ENCODE measurements at regions of chrX and their contacts with region 1.

Region 1: GRCh38 chrX:54529552-54530357 is at the start of gene GNL3L:
- DNase-seq: peak; percentile 93 to 94
- ATAC-seq: peak; percentile 91
- H3K4me3 ChIP-seq: peak within 1 kb of the TSS; percentile 27 to 89
- H3K27ac ChIP-seq: peak within 1 kb of the TSS in 1 of 2 donors; percentile 91
- H3K4me1 ChIP-seq: no peaks in the 10 kb centered on the region
- H3K27me3 ChIP-seq: no peaks in the 10 kb centered on the region
- total RNA-seq, gene GNL3L: 29.8 to 35.1 TPM

Region 2: DNA sequence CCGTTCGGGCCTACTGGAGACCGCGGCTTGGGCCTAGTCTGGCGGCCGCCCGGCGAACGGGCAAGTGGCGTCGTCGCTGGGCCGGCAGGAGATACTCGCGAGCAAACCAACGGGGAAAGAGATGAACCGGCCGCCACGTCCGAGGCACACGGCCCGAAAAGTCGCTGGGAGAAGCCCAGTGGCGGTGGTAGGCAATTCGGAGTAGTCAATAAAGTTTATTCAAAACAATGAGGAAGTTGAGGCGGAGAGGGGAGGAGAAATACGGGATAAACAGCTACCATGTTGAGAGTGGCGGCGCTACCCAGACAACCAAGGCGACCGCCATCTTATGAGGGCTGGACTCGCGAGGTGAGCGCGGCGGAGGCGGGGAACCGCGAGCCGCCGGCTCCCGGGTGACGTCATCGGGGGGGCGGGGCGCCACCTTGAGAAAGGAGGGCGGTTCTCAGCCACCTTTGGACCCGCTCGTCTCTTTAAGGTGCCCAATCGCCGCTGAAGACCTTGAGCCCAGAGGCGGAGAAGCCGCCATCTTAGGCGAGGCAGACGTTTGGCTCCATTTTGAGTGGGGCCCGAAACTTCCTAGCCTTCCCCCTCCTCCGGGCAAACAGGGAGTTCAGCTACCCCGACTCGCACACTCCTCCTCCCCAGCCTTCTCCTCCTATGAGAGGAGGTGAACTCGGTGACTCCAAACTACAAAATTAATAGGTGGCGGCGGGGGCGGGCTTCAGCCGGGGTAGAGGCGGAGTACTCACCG is 485.5 kb before region 1 on chrX and contains the start of gene PHF8:
- intact Hi-C with region 1: loop called in 1 of 2 experiments (anchors 10 kb)
- DNase-seq: peak; percentile 96 to 97
- ATAC-seq: peak; percentile 96
- H3K4me3 ChIP-seq: peak within 1 kb of the TSS; percentile 67 to 96
- H3K27ac ChIP-seq: peak within 1 kb of the TSS; percentile 7 to 93
- H3K4me1 ChIP-seq: no peaks in the 10 kb centered on the region
- H3K27me3 ChIP-seq: no peaks in the 10 kb centered on the region
- total RNA-seq, gene PHF8: 34.2 to 39.7 TPM

Region 3: GRCh38 chrX:54439967-54440871 is 89.5 kb before region 1 on chrX and contains the start of gene TSR2:
- intact Hi-C with region 1: loop called in 1 of 2 experiments (anchors 10 kb)
- DNase-seq: peak; percentile 86 to 90
- ATAC-seq: peak; percentile 95
- H3K4me3 ChIP-seq: peak within 1 kb of the TSS; percentile 65 to 79
- H3K27ac ChIP-seq: no peak within 1 kb of the TSS
- H3K4me1 ChIP-seq: no peaks in the 10 kb centered on the region
- H3K27me3 ChIP-seq: no peaks in the 10 kb centered on the region
- total RNA-seq, gene TSR2: 39.5 to 42.7 TPM

Region 4: DNA sequence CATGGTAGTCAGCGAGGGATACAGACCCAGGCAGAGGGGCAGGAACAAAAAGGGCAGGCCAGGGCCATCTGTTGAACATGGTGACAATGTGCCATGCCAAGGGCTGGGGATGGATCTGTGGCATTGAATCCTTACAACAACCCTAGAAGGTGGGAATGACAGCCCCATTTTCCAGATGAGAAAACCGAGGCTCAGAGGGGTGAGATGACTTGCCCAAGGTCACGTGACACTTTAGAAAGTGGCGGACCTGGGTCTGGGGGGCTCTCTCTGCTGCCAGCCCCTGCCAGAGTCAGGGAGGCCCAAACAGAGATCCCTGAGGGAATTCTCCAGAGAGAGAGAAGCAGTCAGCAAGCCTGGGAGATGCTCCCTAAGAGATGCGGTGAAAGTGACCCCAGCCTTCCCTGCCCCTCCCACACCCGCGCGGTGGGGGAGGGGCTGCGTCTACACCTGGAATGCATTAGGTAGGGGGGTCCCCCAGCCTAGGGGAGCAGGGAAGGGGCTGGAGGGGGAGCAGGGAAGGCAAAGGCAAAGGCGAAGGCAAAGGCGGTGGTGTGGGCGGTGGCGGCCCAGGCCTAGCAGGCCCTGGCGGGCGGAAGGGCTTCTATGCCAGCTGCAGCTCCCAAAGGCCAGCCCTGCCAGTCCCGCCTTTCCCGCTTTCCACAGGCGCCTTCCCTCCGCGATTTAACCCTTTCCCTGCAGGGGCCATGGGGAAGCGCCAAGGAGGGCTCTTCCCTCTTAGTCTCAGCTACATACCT is 46.7 kb before region 1 on chrX:
- intact Hi-C with region 1: loop called in 1 of 2 experiments (anchors 5 kb)
- DNase-seq: peak; percentile 52 to 79
- ATAC-seq: peak; percentile 61
- H3K4me3 ChIP-seq: no peak overlapping the region
- H3K27ac ChIP-seq: peak overlapping the region; percentile 39 to 52
- H3K4me1 ChIP-seq: no peaks in the 10 kb centered on the region
- H3K27me3 ChIP-seq: no peaks in the 10 kb centered on the region

Region 5: DNA sequence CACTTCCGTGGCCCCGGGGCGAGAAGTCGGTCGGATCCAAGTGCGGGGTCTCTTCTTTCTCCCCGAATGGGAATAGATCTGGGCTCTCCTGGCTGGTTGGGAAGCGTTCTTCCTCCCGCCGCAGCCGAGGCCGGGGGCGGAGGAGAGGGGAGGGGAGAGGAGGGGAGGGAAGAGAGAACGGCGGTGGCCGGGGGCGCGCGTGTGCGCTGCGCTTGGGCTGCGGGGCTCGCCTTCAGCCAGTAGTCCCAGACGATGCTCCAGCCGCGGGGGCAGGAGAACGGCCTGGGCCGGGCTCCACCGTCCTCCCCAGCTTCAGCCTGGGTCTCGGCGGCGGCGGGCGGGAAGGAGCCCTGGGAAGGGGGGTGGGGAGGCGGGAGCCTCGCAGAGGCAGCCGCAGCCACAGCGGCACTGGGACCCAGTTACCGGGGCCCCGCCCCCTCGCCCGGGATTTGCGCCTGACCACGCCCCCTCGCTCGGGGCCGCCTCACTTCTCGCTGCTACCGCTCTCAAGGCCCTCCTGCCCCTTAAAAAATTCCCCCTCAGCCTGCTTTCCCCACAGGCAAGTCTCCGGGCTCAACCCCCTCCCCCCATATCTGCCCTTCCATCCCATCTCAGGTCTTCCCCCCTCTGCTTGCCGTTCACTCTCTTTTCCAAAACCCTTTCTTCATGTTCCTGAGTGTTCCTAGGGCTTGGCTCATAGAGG is 33.8 kb before region 1 on chrX and contains the start of gene FGD1:
- intact Hi-C with region 1: loop called in 1 of 2 experiments (anchors 2 kb)
- DNase-seq: peak; percentile 77 to 89
- ATAC-seq: peak; percentile 90
- H3K4me3 ChIP-seq: peak within 1 kb of the TSS; percentile 61 to 95
- H3K27ac ChIP-seq: peak within 1 kb of the TSS; percentile 34 to 89
- H3K4me1 ChIP-seq: peaks cover 0 to 2% of the 10 kb centered on the region in 2 donors
- H3K27me3 ChIP-seq: no peaks in the 10 kb centered on the region
- total RNA-seq, gene FGD1: 7.2 to 12.5 TPM

Region 6: GRCh38 chrX:54570332-54570731 is 40.6 kb after region 1 on chrX:
- intact Hi-C with region 1: no loop called
- DNase-seq: no peak
- ATAC-seq: no peak
- H3K4me3 ChIP-seq: no peak overlapping the region
- H3K27ac ChIP-seq: no peak overlapping the region
- H3K4me1 ChIP-seq: no peaks in the 10 kb centered on the region
- H3K27me3 ChIP-seq: no peaks in the 10 kb centered on the region